CD4-positive, alpha-beta memory T cell (primary cell): ENCODE measurements at regions of chr6 and their contacts with region 1.

Region 1: GRCh38 chr6:16712931-16713484 is 48.3 kb downstream of the ATXN1 start:
- DNase-seq: peak in 1 of 5 donors; percentile 62
- H3K4me3 ChIP-seq: peak overlapping the region; percentile 33 to 45
- H3K4me3 Mint-ChIP-seq: peak overlapping the region; percentile 70 to 89 (median 80)
- H3K27ac ChIP-seq: peak overlapping the region; percentile 67
- H3K27ac Mint-ChIP-seq: peak overlapping the region; percentile 74 to 95 (median 88)
- H3K4me1 ChIP-seq: peaks cover 36% of the 10 kb centered on the region
- H3K4me1 Mint-ChIP-seq: peaks cover 31 to 54% (median 43%) of the 10 kb centered on the region in 4 donors
- H3K27me3 ChIP-seq: no peaks in the 10 kb centered on the region
- H3K27me3 Mint-ChIP-seq: no peaks in the 10 kb centered on the region

Region 2: GRCh38 chr6:16409531-16410441 is 303.2 kb before region 1 on chr6:
- CTCF ChIA-PET with region 1: interaction called, 6 read pairs
- POLR2A ChIA-PET with region 1: no interaction called
- intact Hi-C with region 1: loop called (anchors 5 kb)
- DNase-seq: peak; percentile 45 to 78 (median 54)
- H3K4me3 ChIP-seq: no peak overlapping the region
- H3K4me3 Mint-ChIP-seq: peak overlapping the region in 7 of 8 donors; percentile 49 to 71 (median 68)
- H3K27ac ChIP-seq: no peak overlapping the region
- H3K27ac Mint-ChIP-seq: peak overlapping the region in 6 of 7 donors; percentile 7 to 78 (median 68)
- H3K4me1 ChIP-seq: peaks cover 22% of the 10 kb centered on the region
- H3K4me1 Mint-ChIP-seq: peaks cover 33 to 61% (median 48%) of the 10 kb centered on the region in 4 donors
- H3K27me3 ChIP-seq: no peaks in the 10 kb centered on the region
- H3K27me3 Mint-ChIP-seq: no peaks in the 10 kb centered on the region

Region 3: DNA sequence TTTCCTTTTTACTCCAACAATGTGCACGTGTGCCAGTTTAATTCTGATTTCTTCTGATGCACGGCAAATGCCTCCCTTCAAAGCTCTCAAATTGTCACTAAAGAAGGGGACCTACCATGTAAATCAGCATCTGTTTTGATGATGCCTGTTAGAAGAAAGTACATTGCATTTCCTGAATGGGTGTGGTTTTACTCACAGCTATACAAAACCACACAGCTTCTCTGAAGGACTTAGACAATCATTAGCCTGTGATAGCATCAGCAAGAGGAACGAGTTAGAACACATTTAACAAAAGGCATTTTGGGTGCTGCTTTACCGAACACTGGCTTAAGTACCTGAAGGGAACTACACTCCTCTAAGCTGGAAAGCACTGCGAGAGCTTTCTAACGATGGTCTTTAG is 61.1 kb before region 1 on chr6:
- CTCF ChIA-PET with region 1: interaction called, 11 read pairs
- POLR2A ChIA-PET with region 1: interaction called, 14 read pairs
- intact Hi-C with region 1: no loop called
- DNase-seq: peak; percentile 65 to 83 (median 79)
- H3K4me3 ChIP-seq: peak overlapping the region in 1 of 2 donors; percentile 6
- H3K4me3 Mint-ChIP-seq: peak overlapping the region; percentile 39 to 78 (median 70)
- H3K27ac ChIP-seq: peak overlapping the region; percentile 38
- H3K27ac Mint-ChIP-seq: peak overlapping the region; percentile 89 to 99 (median 93)
- H3K4me1 ChIP-seq: peaks cover 63% of the 10 kb centered on the region
- H3K4me1 Mint-ChIP-seq: peaks cover 46 to 66% (median 54%) of the 10 kb centered on the region in 4 donors
- H3K27me3 ChIP-seq: no peaks in the 10 kb centered on the region
- H3K27me3 Mint-ChIP-seq: no peaks in the 10 kb centered on the region

Region 4: GRCh38 chr6:16657768-16658167 is 55.2 kb before region 1 on chr6:
- CTCF ChIA-PET with region 1: interaction called, 11 read pairs
- POLR2A ChIA-PET with region 1: interaction called, 3 read pairs
- intact Hi-C with region 1: loop called (anchors 2 kb)
- DNase-seq: peak in 3 of 5 donors; percentile 29 to 43 (median 31)
- H3K4me3 ChIP-seq: no peak overlapping the region
- H3K4me3 Mint-ChIP-seq: peak overlapping the region; percentile 55 to 85 (median 68)
- H3K27ac ChIP-seq: peak overlapping the region; percentile 44
- H3K27ac Mint-ChIP-seq: peak overlapping the region; percentile 77 to 95 (median 92)
- H3K4me1 ChIP-seq: peaks cover 75% of the 10 kb centered on the region
- H3K4me1 Mint-ChIP-seq: peaks cover 59 to 78% (median 66%) of the 10 kb centered on the region in 4 donors
- H3K27me3 ChIP-seq: no peaks in the 10 kb centered on the region
- H3K27me3 Mint-ChIP-seq: no peaks in the 10 kb centered on the region

Region 5: DNA sequence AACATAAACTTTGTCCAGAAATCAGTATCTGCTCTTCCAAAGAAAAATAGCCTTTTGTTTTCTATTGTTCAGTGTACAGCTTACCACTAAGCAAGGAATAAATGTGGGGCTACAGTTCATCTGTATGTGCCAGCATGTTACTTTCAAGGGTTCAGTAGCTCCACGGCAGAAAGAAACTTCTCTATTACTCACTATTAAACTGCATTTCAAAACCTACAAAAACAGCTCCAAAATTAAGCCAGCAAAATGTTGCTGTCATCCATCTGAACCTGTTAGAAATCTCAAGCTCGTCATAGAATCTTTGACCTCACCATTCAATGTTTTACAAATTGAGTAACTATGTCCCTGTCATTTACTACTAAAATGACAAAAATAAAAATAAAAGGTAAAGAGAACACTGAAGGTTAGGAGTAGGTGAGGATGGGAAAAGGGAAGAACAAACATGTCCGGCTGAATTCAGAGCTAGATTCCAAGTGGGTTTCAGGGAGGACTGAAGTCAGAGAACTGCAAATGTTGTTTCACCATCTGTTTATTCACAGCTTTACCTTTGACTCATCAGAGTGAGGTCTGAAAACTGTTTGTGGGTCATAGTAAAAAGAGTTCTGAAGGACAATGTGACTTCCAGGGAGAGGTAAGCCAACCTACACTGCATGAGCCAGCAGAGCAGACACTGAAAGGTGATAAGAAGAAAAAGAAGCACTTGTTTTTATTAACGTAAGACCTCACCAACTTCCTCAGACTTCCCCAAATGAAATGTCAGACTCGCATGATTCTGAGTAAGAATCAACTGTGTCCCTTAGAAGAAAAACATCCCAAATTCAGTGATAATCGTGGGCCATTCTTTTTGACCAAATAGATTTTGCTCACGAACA is 13.8 kb before region 1 on chr6:
- CTCF ChIA-PET with region 1: interaction called, 28 read pairs
- POLR2A ChIA-PET with region 1: interaction called, 13 read pairs
- intact Hi-C with region 1: loop called (anchors 2 kb)
- DNase-seq: peak in 2 of 5 donors; percentile 33 to 74
- H3K4me3 ChIP-seq: peak overlapping the region in 1 of 2 donors; percentile 61
- H3K4me3 Mint-ChIP-seq: peak overlapping the region; percentile 86 to 94 (median 92)
- H3K27ac ChIP-seq: peak overlapping the region; percentile 69
- H3K27ac Mint-ChIP-seq: peak overlapping the region; percentile 92 to 97 (median 96)
- H3K4me1 ChIP-seq: peaks cover 78% of the 10 kb centered on the region
- H3K4me1 Mint-ChIP-seq: peaks cover 58 to 83% (median 72%) of the 10 kb centered on the region in 4 donors
- H3K27me3 ChIP-seq: no peaks in the 10 kb centered on the region
- H3K27me3 Mint-ChIP-seq: no peaks in the 10 kb centered on the region

Region 6: DNA sequence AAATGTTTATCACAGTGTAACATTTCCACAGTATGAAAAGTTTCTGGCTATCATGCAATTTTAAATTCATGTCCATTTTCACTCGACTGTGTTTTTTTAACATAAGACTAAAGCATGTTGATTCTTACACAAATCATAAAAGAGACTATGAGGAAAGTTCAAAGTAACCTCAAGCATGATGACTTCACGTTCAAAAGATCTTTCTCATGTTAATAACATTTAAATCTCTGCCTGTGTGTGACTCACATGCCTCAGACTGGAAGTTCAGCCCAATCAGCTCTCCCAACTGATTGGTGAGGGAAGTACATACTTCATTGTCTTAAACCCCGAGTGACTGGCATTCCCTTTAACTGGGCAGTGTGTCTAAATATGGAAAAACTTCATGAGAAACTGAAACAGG is 10.8 kb after region 1 on chr6:
- CTCF ChIA-PET with region 1: interaction called, 15 read pairs
- POLR2A ChIA-PET with region 1: no interaction called
- intact Hi-C with region 1: no loop called
- DNase-seq: peak in 1 of 5 donors; percentile 60
- H3K4me3 ChIP-seq: no peak overlapping the region
- H3K4me3 Mint-ChIP-seq: peak overlapping the region in 2 of 8 donors; percentile 23 to 57
- H3K27ac ChIP-seq: no peak overlapping the region
- H3K27ac Mint-ChIP-seq: peak overlapping the region in 6 of 7 donors; percentile 30 to 82 (median 70)
- H3K4me1 ChIP-seq: peaks cover 24% of the 10 kb centered on the region
- H3K4me1 Mint-ChIP-seq: peaks cover 18 to 67% (median 42%) of the 10 kb centered on the region in 4 donors
- H3K27me3 ChIP-seq: no peaks in the 10 kb centered on the region
- H3K27me3 Mint-ChIP-seq: no peaks in the 10 kb centered on the region

Region 7: DNA sequence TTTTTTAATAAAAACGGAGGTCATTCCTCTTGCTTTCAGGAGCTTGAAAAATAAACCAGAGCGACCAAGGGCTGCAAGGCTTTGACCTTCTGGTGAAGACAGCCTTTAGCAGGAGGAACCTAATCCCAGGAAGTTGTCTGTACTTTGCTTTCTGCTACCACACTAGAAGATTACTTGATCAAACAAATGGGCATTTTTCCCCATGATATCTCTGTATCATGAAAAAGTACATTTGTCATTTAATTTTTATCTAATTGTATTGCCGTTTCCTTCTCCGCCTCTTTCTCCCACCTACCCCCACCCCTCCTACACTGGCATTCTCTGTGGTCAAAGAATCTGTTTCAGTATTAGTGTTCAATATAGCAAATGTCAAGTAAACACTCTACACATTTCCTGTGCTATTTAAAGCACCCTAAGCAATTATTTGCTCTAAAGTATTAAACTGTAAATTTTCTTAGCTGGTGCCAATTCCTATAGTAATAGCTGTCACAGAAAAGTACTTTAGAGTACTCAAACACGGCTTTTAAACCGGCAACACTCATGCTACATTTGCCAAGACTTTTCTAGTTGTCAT is 18.6 kb after region 1 on chr6:
- CTCF ChIA-PET with region 1: interaction called, 15 read pairs
- POLR2A ChIA-PET with region 1: interaction called, 6 read pairs
- intact Hi-C with region 1: loop called (anchors 2 kb)
- DNase-seq: peak; percentile 38 to 50 (median 44)
- H3K4me3 ChIP-seq: peak overlapping the region in 1 of 2 donors; percentile 41
- H3K4me3 Mint-ChIP-seq: peak overlapping the region; percentile 67 to 86 (median 79)
- H3K27ac ChIP-seq: peak overlapping the region; percentile 53
- H3K27ac Mint-ChIP-seq: peak overlapping the region; percentile 79 to 97 (median 84)
- H3K4me1 ChIP-seq: peaks cover 45% of the 10 kb centered on the region
- H3K4me1 Mint-ChIP-seq: peaks cover 39 to 68% (median 56%) of the 10 kb centered on the region in 4 donors
- H3K27me3 ChIP-seq: no peaks in the 10 kb centered on the region
- H3K27me3 Mint-ChIP-seq: no peaks in the 10 kb centered on the region